Activated B cell treated with CpG ODN at 0.5 μM for 24 hours (primary cell): ENCODE measurements at regions of chr4 and their contacts with region 1.

Region 1: GRCh38 chr4:111854494-111855087 is 290.7 kb upstream of the FAM241A start:
- DNase-seq: no peak
- ATAC-seq: no peak
- H3K4me3 Mint-ChIP-seq: no peak overlapping the region
- H3K27ac Mint-ChIP-seq: no peak overlapping the region
- H3K4me1 Mint-ChIP-seq: no peaks in the 10 kb centered on the region
- H3K27me3 Mint-ChIP-seq: no peaks in the 10 kb centered on the region
- CTCF ChIP-seq: no peak

Region 2: DNA sequence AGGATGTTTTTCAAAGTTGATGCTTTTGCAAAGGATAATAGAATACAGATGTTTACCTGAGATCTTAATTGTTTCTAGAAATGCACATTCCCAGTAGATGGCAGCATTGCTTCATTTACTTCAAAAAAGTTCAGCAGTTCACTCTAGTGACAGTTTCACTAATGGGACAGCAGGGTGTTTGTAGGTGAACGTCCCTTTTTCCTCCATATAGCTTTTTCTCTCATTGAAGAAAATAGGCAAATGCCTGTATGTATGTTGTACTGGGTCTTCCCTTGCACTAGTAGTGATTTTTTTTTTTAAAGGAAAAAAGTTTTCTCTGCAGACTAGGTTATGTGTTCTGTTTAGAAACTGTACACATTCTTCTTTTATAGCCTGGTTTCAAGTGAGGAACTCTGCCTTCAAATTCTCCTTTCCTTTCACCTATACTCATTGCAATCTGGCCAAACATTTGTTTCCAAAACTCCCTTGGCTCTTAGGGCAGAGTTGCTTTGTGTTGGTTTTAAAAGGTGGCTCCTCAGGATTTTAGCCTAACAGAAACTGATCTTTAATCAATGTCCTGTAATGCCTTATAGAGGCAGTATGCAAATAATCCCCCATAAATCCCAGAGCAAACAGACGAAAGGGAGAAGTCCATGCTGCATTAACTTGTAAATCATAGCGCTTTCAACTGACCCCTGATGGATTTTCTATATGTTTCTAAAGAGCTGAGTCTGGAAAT is 1855.6 kb before region 1 on chr4:
- CTCF ChIA-PET with region 1: no interaction called
- POLR2A ChIA-PET with region 1: no interaction called
- intact Hi-C with region 1: loop called (anchors 2 kb)
- DNase-seq: no peak
- ATAC-seq: peak; percentile 61
- H3K4me3 Mint-ChIP-seq: no peak overlapping the region
- H3K27ac Mint-ChIP-seq: no peak overlapping the region
- H3K4me1 Mint-ChIP-seq: peaks cover 9% of the 10 kb centered on the region
- H3K27me3 Mint-ChIP-seq: peaks cover 5% of the 10 kb centered on the region
- CTCF ChIP-seq: peak; percentile 66

Region 3: DNA sequence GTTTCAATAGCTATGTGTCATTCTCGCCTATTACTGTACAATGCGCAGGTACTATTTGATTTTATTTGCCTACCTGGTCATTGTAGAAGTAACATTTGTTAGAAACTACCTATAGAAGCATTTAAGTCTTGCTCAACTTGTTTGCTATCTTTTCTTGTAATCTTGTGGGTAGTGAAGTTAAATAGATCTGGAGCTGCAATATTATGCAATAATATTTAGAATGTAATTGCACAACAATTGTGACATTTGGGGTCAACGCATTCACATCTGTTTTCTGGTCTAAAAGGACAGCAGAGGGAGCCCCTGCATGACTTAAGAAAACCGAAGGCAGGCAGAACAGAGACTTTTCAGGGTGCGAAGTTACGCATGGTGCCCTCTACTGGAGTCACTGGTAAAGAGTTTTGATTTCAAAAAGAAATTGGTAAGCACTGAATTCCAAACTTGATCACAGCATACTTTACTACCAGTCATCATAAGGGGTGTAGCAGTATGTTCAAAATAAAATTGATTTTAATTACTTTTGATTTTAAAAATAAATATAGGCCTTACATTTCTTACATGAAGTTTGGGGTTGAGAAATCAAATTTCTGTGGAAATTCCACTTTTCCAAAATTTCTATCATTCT is 212.5 kb before region 1 on chr4:
- CTCF ChIA-PET with region 1: no interaction called
- POLR2A ChIA-PET with region 1: no interaction called
- intact Hi-C with region 1: loop called (anchors 5 kb)
- DNase-seq: no peak
- ATAC-seq: peak; percentile 68
- H3K4me3 Mint-ChIP-seq: no peak overlapping the region
- H3K27ac Mint-ChIP-seq: no peak overlapping the region
- H3K4me1 Mint-ChIP-seq: no peaks in the 10 kb centered on the region
- H3K27me3 Mint-ChIP-seq: no peaks in the 10 kb centered on the region
- CTCF ChIP-seq: no peak

Region 4: DNA sequence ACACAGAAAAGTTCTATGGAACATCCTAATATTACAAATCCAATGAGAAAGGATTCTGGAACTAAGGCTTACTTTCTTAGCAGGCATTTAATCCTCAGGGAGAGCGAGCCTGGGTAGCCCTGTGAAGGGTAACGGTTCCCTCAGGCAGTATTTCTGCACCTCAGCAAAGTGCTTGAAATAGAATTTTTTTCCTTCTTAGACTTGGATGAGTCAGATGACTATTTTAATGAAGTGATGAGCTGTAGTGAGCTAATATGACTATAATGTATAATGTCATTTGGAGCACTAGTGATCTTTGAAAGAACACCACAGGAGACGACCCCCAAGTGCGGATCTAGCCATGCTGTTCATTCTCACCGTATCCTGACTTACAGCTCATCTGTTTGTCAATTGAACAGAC is 202.4 kb before region 1 on chr4:
- CTCF ChIA-PET with region 1: no interaction called
- POLR2A ChIA-PET with region 1: no interaction called
- intact Hi-C with region 1: no loop called
- DNase-seq: no peak
- ATAC-seq: no peak
- H3K4me3 Mint-ChIP-seq: no peak overlapping the region
- H3K27ac Mint-ChIP-seq: no peak overlapping the region
- H3K4me1 Mint-ChIP-seq: no peaks in the 10 kb centered on the region
- H3K27me3 Mint-ChIP-seq: peaks cover 10% of the 10 kb centered on the region
- CTCF ChIP-seq: no peak